ENCODE measurements at regions of chr4 and their contacts with region 1.

Region 1: DNA sequence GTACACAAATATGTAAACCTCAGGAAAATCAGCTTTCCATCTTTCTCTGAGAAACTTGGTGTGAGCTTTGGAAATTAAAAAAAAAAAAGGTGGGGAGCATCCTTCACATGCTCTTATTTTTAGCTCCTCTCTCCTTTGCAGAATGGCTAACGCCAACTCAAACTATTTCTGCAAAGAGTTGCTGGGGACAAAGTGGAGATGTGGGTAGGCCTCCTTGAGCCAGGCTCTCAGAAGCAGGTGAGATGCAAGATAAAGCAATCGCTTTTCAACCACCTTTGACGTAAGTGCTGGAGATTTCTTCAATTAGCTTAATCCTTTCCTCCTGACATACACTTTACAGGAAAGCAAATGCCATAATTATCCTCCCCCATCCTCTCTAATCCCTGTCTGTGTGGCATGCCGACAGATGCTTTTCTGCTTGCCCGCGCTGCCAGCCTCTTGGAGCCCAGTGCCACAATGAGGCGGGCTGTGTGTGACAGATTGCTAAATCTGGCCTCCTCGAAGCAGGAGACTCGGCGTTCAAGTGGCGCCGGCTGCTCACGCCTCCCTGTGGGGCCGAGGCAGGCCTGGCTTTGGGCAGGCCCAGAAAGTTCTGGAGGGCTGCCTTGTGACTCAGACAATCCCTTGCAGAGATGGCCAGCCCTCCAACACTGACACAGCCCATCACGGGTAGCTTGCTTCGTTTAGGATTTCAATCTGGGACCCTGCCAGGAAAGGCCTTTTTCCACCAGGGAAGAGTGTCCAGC is 64.9 kb upstream of the SOD3 start:
- DNase-seq: no peak
- H3K4me3 ChIP-seq: no peak overlapping the region
- H3K27ac ChIP-seq: no peak overlapping the region
- H3K4me1 ChIP-seq: no peaks in the 10 kb centered on the region
- H3K27me3 ChIP-seq: no peaks in the 10 kb centered on the region
- CTCF ChIP-seq: no peak
- POLR2A ChIP-seq: no peak

Region 2: GRCh38 chr4:24664956-24665355 is 65.5 kb before region 1 on chr4:
- intact Hi-C with region 1: no loop called
- DNase-seq: no peak
- H3K4me3 ChIP-seq: no peak overlapping the region
- H3K27ac ChIP-seq: no peak overlapping the region
- H3K4me1 ChIP-seq: no peaks in the 10 kb centered on the region
- H3K27me3 ChIP-seq: no peaks in the 10 kb centered on the region
- CTCF ChIP-seq: no peak
- POLR2A ChIP-seq: no peak

Region 3: DNA sequence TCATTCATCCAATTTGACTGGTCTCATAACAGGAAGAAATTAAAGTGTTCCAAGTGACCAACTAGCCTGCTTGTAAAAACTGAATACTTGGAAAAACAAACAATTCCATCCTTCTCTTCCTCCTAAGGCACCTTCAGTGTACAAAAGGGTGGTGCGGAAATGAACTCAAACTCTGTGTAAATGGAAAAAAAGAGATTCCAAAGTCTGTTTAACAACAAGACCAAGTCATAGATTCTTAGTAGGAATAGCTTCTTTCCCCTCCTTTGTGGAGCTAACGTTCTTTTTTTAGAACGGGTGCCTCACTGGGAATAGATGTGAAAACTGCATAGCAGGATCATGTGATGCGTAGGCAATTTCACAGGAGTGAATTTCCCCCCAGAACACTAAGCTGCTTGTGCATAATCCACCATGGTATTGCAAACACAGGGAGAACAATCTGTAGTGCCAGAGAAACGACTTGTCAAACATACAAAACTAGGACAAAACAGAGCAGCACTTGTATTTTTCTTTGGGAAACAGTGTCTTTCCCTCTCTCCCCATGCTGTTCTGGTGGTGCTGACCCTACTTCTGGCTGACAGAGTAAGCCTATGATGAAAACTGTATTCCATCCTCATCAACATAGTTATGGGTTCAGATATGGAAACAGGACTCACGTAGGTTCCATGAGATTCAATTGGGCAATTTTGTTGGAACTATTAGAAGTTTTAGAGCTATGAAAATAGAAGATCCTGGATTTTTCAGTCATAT is 51.7 kb after region 1 on chr4:
- intact Hi-C with region 1: loop called (anchors 5 kb)
- DNase-seq: peak; percentile 40
- H3K4me3 ChIP-seq: no peak overlapping the region
- H3K27ac ChIP-seq: peak overlapping the region in 1 of 2 donors; percentile 6
- H3K4me1 ChIP-seq: peaks cover 7% of the 10 kb centered on the region
- H3K27me3 ChIP-seq: no peaks in the 10 kb centered on the region
- CTCF ChIP-seq: no peak
- POLR2A ChIP-seq: no peak

Region 4: DNA sequence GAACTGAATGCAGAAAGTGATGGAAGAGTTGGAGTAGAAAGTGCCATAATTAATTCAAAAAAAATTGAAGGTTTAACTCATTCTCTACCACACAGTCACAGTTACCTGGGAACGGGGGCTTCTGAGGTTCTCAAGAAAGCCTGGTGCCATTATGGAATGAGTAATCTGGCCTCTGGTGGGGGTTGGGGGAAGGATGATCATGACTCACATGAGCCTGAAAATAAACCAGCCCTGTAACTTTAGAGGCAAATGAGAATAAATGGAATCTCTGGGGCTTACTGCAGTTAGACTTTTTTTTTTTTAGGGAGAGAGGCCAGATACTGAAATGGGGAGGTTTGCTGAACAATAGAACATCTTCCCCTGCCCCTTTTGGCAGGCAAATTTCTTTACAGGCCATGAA is 120.2 kb after region 1 on chr4:
- intact Hi-C with region 1: loop called (anchors 5 kb)
- DNase-seq: no peak
- H3K4me3 ChIP-seq: no peak overlapping the region
- H3K27ac ChIP-seq: no peak overlapping the region
- H3K4me1 ChIP-seq: no peaks in the 10 kb centered on the region
- H3K27me3 ChIP-seq: no peaks in the 10 kb centered on the region
- CTCF ChIP-seq: no peak
- POLR2A ChIP-seq: no peak